ENCODE measurements at regions of chr2 and their contacts with region 1.

Region 1: DNA sequence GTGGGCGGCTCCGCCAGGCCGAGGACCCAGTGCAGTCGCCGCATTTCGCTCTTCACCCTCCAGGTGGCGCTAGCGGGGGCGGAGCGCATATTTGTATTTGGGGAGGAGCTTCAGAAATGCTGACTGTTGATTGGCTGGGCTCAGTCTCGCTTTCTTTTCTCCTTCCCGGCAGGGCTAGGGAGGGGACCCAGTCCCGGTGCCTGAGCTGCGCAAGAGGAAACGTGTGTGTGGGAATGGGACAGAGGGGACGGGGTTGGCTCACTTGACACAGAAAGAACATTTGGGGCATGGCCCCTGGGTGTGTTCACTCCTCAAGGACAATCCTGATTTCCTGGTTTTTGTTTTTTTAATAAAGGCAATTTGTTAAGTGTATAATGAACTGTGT is 20.3 kb upstream of the DNMT3A start:
- DNase-seq: peak; percentile 98
- ATAC-seq: peak; percentile 97
- H3K4me3 Mint-ChIP-seq: peak overlapping the region; percentile 56
- H3K27ac Mint-ChIP-seq: no peak overlapping the region
- H3K4me1 Mint-ChIP-seq: peaks cover 10% of the 10 kb centered on the region
- H3K27me3 Mint-ChIP-seq: peaks cover 68% of the 10 kb centered on the region
- CTCF ChIP-seq: peak; percentile 85

Region 2: DNA sequence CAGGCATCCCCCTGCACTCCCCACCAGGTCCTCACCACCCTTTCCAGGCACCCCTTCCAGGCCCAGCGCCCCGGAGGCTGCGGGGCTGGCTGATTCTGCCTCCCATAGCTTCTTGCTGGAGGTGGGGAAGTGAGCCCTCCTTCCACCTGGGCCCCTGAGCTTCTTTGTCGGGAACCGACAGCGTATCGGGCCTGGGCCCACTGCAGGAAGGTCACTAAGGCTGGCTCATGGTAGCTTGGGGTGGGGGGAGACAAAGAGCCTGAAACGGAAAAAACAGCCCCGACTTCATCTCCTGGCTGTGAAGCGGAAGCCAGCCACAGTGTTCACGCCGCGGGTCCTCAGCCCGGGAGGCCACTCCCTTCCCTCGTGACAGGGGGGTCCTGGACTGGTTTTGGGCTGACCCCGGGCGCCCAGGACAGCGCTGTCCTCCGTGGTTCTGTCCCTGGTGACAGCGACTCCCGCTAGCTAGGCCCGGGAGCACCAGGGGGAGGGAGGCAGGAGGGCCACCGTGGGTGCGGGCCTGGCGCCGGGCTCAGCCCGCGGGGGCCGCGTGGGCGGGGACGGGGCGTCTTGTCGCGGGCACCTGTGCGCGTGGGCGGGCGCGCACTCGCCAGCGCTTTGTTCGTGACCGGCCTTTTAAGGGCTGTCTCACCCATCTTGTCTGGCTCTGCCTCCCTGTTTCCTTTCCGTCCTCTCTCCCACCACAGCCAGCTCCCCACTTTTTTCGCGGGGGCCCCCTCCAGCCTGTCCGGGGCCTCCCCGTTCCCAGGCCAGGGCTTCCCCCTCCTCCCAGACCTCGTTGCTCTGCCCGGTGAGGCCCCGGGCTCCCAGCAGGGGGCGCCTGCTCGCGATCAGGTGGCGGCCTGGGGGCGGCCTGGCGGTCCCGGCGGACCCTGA is 85.2 kb before region 1 on chr2:
- CTCF ChIA-PET with region 1: interaction called, 33 read pairs
- POLR2A ChIA-PET with region 1: no interaction called
- DNase-seq: peak; percentile 81
- ATAC-seq: peak; percentile 47
- H3K4me3 Mint-ChIP-seq: peak overlapping the region; percentile 47
- H3K27ac Mint-ChIP-seq: no peak overlapping the region
- H3K4me1 Mint-ChIP-seq: peaks cover 64% of the 10 kb centered on the region
- H3K27me3 Mint-ChIP-seq: no peaks in the 10 kb centered on the region; the same call in 1 of the 2 replicates
- CTCF ChIP-seq: peak; percentile 73

Region 3: GRCh38 chr2:25309402-25309801 is 52.6 kb before region 1 on chr2:
- CTCF ChIA-PET with region 1: interaction called, 53 read pairs
- POLR2A ChIA-PET with region 1: no interaction called
- DNase-seq: peak; percentile 78
- ATAC-seq: peak; percentile 57
- H3K4me3 Mint-ChIP-seq: no peak overlapping the region
- H3K27ac Mint-ChIP-seq: 0 out of 2 replicates have a peak overlapping the region, but pooled peaks have one; percentile 5
- H3K4me1 Mint-ChIP-seq: peaks cover 55% of the 10 kb centered on the region
- H3K27me3 Mint-ChIP-seq: no peaks in the 10 kb centered on the region
- CTCF ChIP-seq: no peak; the same call in 1 of the 2 replicates

Region 4: GRCh38 chr2:25323042-25323514 is 39.0 kb before region 1 on chr2:
- CTCF ChIA-PET with region 1: interaction called, 14 read pairs
- POLR2A ChIA-PET with region 1: no interaction called
- DNase-seq: peak; percentile 71
- ATAC-seq: peak; percentile 94
- H3K4me3 Mint-ChIP-seq: no peak overlapping the region
- H3K27ac Mint-ChIP-seq: no peak overlapping the region
- H3K4me1 Mint-ChIP-seq: peaks cover 20% of the 10 kb centered on the region
- H3K27me3 Mint-ChIP-seq: no peaks in the 10 kb centered on the region
- CTCF ChIP-seq: no peak

Region 5: GRCh38 chr2:25376750-25377621 is 14.9 kb after region 1 on chr2:
- CTCF ChIA-PET with region 1: interaction called, 75 read pairs
- POLR2A ChIA-PET with region 1: no interaction called
- DNase-seq: peak; percentile 92
- ATAC-seq: peak; percentile 95
- H3K4me3 Mint-ChIP-seq: peak overlapping the region; percentile 52
- H3K27ac Mint-ChIP-seq: peak overlapping the region; percentile 48; the same call in 1 of the 2 replicates
- H3K4me1 Mint-ChIP-seq: peaks cover 16% of the 10 kb centered on the region
- H3K27me3 Mint-ChIP-seq: peaks cover 26% of the 10 kb centered on the region
- CTCF ChIP-seq: peak; percentile 91

Region 6: GRCh38 chr2:25397777-25398176 is 35.7 kb after region 1 on chr2:
- CTCF ChIA-PET with region 1: interaction called, 11 read pairs
- POLR2A ChIA-PET with region 1: no interaction called
- DNase-seq: no peak
- ATAC-seq: no peak
- H3K4me3 Mint-ChIP-seq: no peak overlapping the region
- H3K27ac Mint-ChIP-seq: peak overlapping the region; percentile 51; the same call in 1 of the 2 replicates
- H3K4me1 Mint-ChIP-seq: peaks cover 12% of the 10 kb centered on the region
- H3K27me3 Mint-ChIP-seq: no peaks in the 10 kb centered on the region
- CTCF ChIP-seq: no peak

Region 7: DNA sequence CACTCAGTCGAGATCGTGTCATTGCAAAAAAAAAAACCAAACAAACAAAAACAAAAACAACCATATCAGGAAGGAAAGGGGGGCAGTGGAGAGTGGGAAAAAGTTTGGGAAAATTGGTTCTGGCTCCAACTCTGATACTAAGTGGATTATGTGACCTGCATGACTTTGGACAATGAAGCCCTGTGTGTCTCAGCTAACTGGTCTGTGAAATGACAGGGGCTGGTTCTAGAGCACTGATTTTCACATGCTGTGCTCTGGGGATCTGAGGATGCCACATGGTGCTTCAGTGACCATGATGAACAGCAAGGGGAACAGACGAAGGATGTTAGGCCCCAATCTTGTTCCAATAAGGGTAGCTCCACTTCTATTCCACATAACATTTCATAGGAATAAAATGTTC is 137.1 kb after region 1 on chr2:
- CTCF ChIA-PET with region 1: no interaction called
- POLR2A ChIA-PET with region 1: no interaction called
- DNase-seq: no peak
- ATAC-seq: no peak
- H3K4me3 Mint-ChIP-seq: no peak overlapping the region
- H3K27ac Mint-ChIP-seq: no peak overlapping the region
- H3K4me1 Mint-ChIP-seq: peaks cover 4% of the 10 kb centered on the region; the same call in 1 of the 2 replicates
- H3K27me3 Mint-ChIP-seq: no peaks in the 10 kb centered on the region
- CTCF ChIP-seq: no peak

Region 8: GRCh38 chr2:25664183-25664964 is 302.3 kb after region 1 on chr2:
- CTCF ChIA-PET with region 1: interaction called, 17 read pairs
- POLR2A ChIA-PET with region 1: no interaction called
- DNase-seq: peak; percentile 69
- ATAC-seq: peak; percentile 92
- H3K4me3 Mint-ChIP-seq: no peak overlapping the region; the same call in 1 of the 2 replicates
- H3K27ac Mint-ChIP-seq: peak overlapping the region; percentile 68
- H3K4me1 Mint-ChIP-seq: peaks cover 26% of the 10 kb centered on the region
- H3K27me3 Mint-ChIP-seq: no peaks in the 10 kb centered on the region
- CTCF ChIP-seq: no peak; the same call in 1 of the 2 replicates